Mammary epithelial cell (primary cell): ENCODE measurements at regions of chr13 and their contacts with region 1.

Region 1: DNA sequence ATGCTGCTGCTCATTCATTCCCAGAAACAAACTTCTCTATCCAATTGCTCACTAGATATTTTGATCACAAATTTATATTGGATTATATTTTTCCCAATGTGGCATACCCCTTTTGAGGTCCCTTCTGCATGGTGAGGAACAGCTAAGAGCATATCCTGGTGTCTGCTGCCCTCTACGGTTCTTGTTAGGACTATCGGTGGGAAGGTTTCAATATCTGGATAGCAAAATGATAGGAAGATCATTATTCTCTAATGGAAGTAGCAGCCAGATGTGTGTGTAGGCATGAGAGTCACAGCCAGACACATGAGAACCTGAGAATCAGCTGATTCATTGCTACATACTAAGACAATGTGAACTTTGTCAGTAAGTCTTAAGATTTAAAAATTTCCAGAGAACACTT is 1422.4 kb upstream of the MIR17HG start:
- DNase-seq: peak; percentile 45
- H3K4me3 ChIP-seq: no peak overlapping the region
- H3K27ac ChIP-seq: no peak overlapping the region
- H3K4me1 ChIP-seq: peaks cover 6% of the 10 kb centered on the region
- H3K27me3 ChIP-seq: no peaks in the 10 kb centered on the region
- CTCF ChIP-seq: peak; percentile 58 to 78

Region 2: DNA sequence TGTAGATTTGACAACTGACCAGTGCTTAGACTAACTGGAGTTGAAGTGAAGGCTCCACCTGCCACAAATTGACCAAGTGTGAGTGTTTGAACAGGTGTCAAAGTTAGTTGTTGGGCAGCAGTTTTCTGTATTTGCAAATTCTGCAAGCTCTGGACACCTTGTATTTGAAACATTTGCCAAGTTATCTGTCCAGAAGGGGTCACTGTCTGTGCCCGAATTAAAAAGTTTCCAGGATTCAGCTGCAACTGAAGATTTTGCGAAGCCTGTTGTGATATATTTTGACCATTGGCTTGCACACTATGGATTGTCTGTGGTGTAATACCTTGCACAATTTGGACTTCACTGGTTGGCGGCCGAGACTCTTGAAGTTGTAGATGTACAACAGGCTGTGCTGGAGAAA is 563.2 kb before region 1 on chr13:
- CTCF ChIA-PET with region 1: no interaction called
- dilution Hi-C with region 1: no loop called
- in situ Hi-C with region 1: no loop called
- intact Hi-C with region 1: loop called (anchors 5 kb)
- DNase-seq: peak; percentile 4
- H3K4me3 ChIP-seq: no peak overlapping the region
- H3K27ac ChIP-seq: no peak overlapping the region
- H3K4me1 ChIP-seq: no peaks in the 10 kb centered on the region
- H3K27me3 ChIP-seq: no peaks in the 10 kb centered on the region
- CTCF ChIP-seq: peak; percentile 21 to 40

Region 3: GRCh38 chr13:89432997-89433396 is 492.1 kb before region 1 on chr13:
- CTCF ChIA-PET with region 1: interaction called, 18 read pairs
- dilution Hi-C with region 1: no loop called
- in situ Hi-C with region 1: no loop called
- intact Hi-C with region 1: loop called (anchors 1 kb)
- DNase-seq: no peak
- H3K4me3 ChIP-seq: no peak overlapping the region
- H3K27ac ChIP-seq: no peak overlapping the region
- H3K4me1 ChIP-seq: no peaks in the 10 kb centered on the region
- H3K27me3 ChIP-seq: no peaks in the 10 kb centered on the region
- CTCF ChIP-seq: no peak

Region 4: GRCh38 chr13:89695343-89696257 is 229.5 kb before region 1 on chr13:
- CTCF ChIA-PET with region 1: interaction called, 4 read pairs
- dilution Hi-C with region 1: no loop called
- in situ Hi-C with region 1: no loop called
- intact Hi-C with region 1: loop called (anchors 1 kb)
- DNase-seq: peak; percentile 44
- H3K4me3 ChIP-seq: no peak overlapping the region
- H3K27ac ChIP-seq: no peak overlapping the region
- H3K4me1 ChIP-seq: no peaks in the 10 kb centered on the region
- H3K27me3 ChIP-seq: no peaks in the 10 kb centered on the region
- CTCF ChIP-seq: peak; percentile 88

Region 5: GRCh38 chr13:89726690-89727435 is 198.2 kb before region 1 on chr13:
- CTCF ChIA-PET with region 1: no interaction called
- dilution Hi-C with region 1: no loop called
- in situ Hi-C with region 1: loop called in 1 of 2 experiments (anchors 25 kb)
- intact Hi-C with region 1: no loop called
- DNase-seq: peak; percentile 95
- H3K4me3 ChIP-seq: peak overlapping the region in 1 of 3 experiments; percentile 9
- H3K27ac ChIP-seq: peak overlapping the region; percentile 94
- H3K4me1 ChIP-seq: no peaks in the 10 kb centered on the region
- H3K27me3 ChIP-seq: no peaks in the 10 kb centered on the region
- CTCF ChIP-seq: no peak

Region 6: GRCh38 chr13:89827552-89827951 is 97.6 kb before region 1 on chr13:
- CTCF ChIA-PET with region 1: no interaction called
- dilution Hi-C with region 1: no loop called
- in situ Hi-C with region 1: no loop called
- intact Hi-C with region 1: no loop called
- DNase-seq: no peak
- H3K4me3 ChIP-seq: no peak overlapping the region
- H3K27ac ChIP-seq: no peak overlapping the region
- H3K4me1 ChIP-seq: no peaks in the 10 kb centered on the region
- H3K27me3 ChIP-seq: no peaks in the 10 kb centered on the region
- CTCF ChIP-seq: no peak